ENCODE measurements at regions of chr1 and their contacts with region 1.

Region 1: DNA sequence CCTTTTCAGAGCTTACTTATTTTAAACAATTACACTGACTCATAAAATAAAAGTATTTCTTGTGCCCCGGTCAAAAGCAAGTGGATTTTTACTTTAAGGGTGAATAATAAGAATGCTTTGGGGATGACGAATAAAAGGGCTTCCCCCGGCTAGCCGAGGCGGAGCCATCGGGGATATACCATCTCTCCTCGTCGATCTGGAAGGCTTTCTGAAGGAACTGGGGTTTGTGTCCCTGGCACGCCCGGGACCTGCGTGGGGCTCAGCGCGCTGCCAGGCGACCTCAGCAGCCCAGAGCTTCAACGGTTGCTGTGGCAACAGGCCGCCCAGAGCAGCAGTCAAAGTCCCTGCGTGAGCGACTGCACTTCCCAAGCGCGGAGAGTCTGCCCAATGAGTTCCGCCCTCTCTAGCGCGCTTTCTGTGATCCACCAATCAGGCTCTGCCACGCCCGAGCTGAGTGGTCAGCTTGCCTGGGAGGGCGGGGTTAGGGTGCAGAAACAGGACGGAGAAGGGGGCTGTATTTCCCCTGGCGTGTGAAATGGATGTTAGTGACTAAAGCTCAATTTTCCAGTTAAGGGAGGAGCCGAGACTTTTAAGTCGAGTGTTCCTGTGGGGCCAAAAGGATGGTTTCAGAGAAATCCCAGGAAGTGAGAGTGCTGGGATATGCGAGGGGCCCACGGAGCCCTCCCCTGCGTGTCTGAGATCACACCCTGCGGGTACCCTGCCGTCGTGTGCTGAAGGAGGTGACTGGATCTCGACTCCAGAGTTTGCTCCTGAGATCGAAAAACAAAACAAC is 33.0 kb upstream of the MGST3 start:
- DNase-seq: peak; percentile 91
- ATAC-seq: peak; percentile 97
- H3K4me3 ChIP-seq: peak overlapping the region; percentile 57 to 61
- H3K27ac ChIP-seq: peak overlapping the region; percentile 53
- H3K4me1 ChIP-seq: peaks cover 12 to 23% of the 10 kb centered on the region in 2 experiments
- H3K27me3 ChIP-seq: peaks cover 17% of the 10 kb centered on the region
- CTCF ChIP-seq: no peak
- POLR2A ChIP-seq: no peak
- RAD21 ChIP-seq: no peak

Region 2: DNA sequence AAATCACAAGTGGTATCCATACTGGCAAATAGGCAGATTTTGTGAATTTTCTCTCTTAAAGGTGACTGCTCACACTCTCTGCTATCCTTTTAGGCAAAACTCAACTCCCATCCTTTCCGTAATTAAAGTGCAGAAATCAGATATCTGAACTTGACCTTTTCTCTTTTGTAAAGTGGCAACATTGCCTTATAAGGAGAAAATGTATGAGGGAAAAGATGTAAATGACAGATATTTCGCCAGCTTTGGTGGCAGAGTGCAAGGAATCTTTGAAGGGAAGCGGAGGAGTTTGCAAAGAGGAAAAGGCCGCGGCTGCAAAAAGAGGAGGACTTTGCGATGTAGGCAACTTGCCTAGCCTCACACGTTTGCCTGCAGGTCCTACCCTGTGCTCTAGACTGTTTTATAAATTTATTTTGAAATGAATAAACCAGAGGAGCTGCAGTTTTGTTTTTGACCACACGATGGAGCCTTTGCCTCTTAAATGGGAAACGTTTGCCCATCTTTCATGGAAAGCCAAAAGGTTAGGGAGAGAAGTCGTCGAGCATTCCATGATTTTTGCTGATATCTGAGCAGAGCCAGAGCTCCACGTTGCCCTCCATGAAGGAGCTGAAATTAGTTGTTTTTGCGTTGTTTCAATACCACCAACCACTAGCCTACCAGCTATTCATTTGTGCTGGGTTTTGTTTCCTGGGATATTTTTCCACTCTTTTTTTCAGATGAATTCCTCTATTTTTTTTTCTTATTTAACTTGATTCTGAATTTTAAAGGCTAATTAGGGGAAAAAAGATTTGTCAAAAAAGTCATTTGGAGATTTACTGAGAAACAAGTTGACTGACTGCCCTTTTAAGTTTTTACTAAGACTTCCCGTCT is 483.8 kb before region 1 on chr1:
- CTCF ChIA-PET with region 1: no interaction called
- POLR2A ChIA-PET with region 1: no interaction called
- RAD21 ChIA-PET with region 1: no interaction called
- intact Hi-C with region 1: loop called (anchors 10 kb)
- DNase-seq: peak; percentile 44
- ATAC-seq: peak; percentile 74
- H3K4me3 ChIP-seq: no peak overlapping the region
- H3K27ac ChIP-seq: no peak overlapping the region
- H3K4me1 ChIP-seq: peaks cover 0 to 13% of the 10 kb centered on the region in 2 experiments; a peak in 2 of 4 replicates
- H3K27me3 ChIP-seq: peaks cover 16% of the 10 kb centered on the region
- CTCF ChIP-seq: peak; percentile 65 to 79 (median 67)
- POLR2A ChIP-seq: no peak
- RAD21 ChIP-seq: peak; percentile 82

Region 3: DNA sequence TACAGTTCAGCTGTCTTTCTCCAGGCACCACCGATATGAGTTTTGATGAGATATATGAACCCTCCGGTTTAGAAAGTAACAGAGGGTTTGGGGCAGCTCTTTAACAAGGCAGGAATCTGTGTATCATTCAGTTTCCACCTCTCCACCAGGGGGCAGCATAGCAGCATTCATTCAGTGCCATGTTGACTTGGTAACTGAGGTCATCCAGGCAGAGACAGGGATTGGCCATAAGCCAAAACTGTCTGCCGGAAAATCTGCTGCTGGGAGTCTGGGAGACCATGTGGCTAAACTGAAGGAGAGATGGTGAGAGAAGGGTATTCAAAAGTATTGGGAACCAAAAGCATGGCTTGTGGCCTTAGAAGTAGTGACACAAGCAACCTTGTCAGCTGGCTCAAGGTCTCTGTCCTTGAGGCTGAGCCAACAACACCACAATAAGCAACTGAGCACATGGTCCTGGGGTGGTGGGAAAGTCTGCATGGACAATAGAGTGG is 340.1 kb before region 1 on chr1:
- CTCF ChIA-PET with region 1: interaction called, 6 read pairs
- POLR2A ChIA-PET with region 1: no interaction called
- RAD21 ChIA-PET with region 1: no interaction called
- intact Hi-C with region 1: loop called (anchors 1 kb)
- DNase-seq: peak; percentile 65
- ATAC-seq: peak; percentile 95
- H3K4me3 ChIP-seq: no peak overlapping the region
- H3K27ac ChIP-seq: no peak overlapping the region
- H3K4me1 ChIP-seq: no peaks in the 10 kb centered on the region
- H3K27me3 ChIP-seq: peaks cover 38% of the 10 kb centered on the region
- CTCF ChIP-seq: peak; percentile 73 to 93 (median 82)
- POLR2A ChIP-seq: no peak
- RAD21 ChIP-seq: peak; percentile 80

Region 4: GRCh38 chr1:165392634-165393571 is 205.2 kb before region 1 on chr1:
- CTCF ChIA-PET with region 1: interaction called, 21 read pairs
- POLR2A ChIA-PET with region 1: no interaction called
- RAD21 ChIA-PET with region 1: interaction called, 4 to 8 read pairs
- intact Hi-C with region 1: loop called (anchors 1 kb)
- DNase-seq: peak; percentile 55
- ATAC-seq: peak; percentile 99
- H3K4me3 ChIP-seq: no peak overlapping the region
- H3K27ac ChIP-seq: no peak overlapping the region
- H3K4me1 ChIP-seq: peaks cover 4 to 7% of the 10 kb centered on the region in 2 experiments; a peak in 2 of 4 replicates
- H3K27me3 ChIP-seq: peaks cover 38% of the 10 kb centered on the region
- CTCF ChIP-seq: peak; percentile 63 to 94 (median 91)
- POLR2A ChIP-seq: no peak
- RAD21 ChIP-seq: peak; percentile 86

Region 5: DNA sequence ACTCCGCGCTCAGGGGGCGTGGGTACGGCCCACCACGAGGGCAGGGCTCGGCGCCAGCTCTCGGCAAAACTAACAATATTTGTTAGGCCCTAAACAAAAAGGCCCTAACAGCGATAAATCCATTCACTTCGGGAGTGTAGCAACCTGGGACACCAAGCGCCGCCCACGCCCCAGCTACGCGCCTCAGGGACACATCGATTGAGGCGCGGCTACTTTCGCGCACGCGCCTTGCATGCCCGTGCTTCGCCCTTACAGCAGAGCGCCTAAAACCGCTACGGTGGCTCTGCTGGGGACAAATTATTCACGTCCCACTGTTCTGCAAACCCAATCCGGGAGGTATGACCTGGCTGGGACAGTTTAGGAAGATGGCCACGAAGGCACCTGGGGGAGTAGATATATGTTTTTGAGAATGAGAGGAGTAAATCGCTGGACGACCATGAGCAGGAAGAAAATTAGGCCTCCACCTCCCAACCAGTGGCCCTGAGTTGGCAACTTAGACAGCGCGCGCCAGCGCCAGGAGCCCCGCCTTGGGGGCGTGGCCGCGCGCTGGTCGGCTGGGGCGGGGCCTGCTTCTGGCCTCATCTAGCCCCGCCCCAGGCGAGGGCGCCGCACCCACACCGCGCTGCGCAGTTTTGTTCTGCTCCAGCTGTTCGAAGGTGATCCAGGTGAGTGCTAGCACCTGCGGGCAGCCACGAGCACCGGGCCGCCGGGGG is 32.7 kb after region 1 on chr1 and contains the start of gene MGST3:
- CTCF ChIA-PET with region 1: no interaction called
- POLR2A ChIA-PET with region 1: no interaction called
- RAD21 ChIA-PET with region 1: no interaction called
- intact Hi-C with region 1: loop called (anchors 2 kb)
- DNase-seq: peak; percentile 94
- ATAC-seq: peak; percentile 89
- H3K4me3 ChIP-seq: peak within 1 kb of the TSS; percentile 87 to 88
- H3K27ac ChIP-seq: peak within 1 kb of the TSS; percentile 65
- H3K4me1 ChIP-seq: peaks cover 10 to 31% of the 10 kb centered on the region in 2 experiments
- H3K27me3 ChIP-seq: no peaks in the 10 kb centered on the region
- CTCF ChIP-seq: no peak
- POLR2A ChIP-seq: peak; percentile 78
- RAD21 ChIP-seq: no peak
- total RNA-seq, gene MGST3: 93.7 TPM

Region 6: GRCh38 chr1:165768513-165769394 is 170.7 kb after region 1 on chr1 and contains the start of gene TMCO1:
- CTCF ChIA-PET with region 1: no interaction called
- POLR2A ChIA-PET with region 1: no interaction called
- RAD21 ChIA-PET with region 1: no interaction called
- intact Hi-C with region 1: loop called (anchors 5 kb)
- DNase-seq: peak; percentile 97
- ATAC-seq: peak; percentile 96
- H3K4me3 ChIP-seq: peak within 1 kb of the TSS; percentile 79 to 95
- H3K27ac ChIP-seq: peak within 1 kb of the TSS; percentile 87
- H3K4me1 ChIP-seq: peaks cover 9 to 33% of the 10 kb centered on the region in 2 experiments; a peak in 3 of 4 replicates
- H3K27me3 ChIP-seq: no peaks in the 10 kb centered on the region
- CTCF ChIP-seq: peak in 1 of 3 experiments; percentile 20; a peak in 1 of 6 replicates
- POLR2A ChIP-seq: peak; percentile 88
- RAD21 ChIP-seq: no peak
- total RNA-seq, gene TMCO1: 61.2 TPM

Region 7: DNA sequence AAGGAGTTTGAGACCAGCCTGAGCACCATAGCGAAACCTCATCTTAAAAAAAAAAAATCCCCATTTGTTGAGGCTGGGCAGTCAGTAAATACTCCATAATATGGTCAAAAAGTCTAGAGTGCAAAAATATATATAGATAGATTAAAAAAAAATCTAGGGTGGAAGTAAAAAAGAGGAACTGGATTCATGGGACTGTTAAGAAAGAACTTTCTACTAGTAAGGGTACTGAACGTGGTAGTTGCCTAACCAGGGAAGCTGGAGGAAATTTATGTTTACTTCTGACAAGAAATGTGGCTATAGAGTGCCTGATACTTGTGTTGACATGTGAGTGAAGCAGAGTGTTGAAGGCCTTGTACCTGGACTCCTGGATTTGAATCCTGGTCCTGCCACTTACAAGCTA is 834.6 kb after region 1 on chr1:
- CTCF ChIA-PET with region 1: no interaction called
- POLR2A ChIA-PET with region 1: no interaction called
- RAD21 ChIA-PET with region 1: no interaction called
- intact Hi-C with region 1: loop called (anchors 10 kb)
- DNase-seq: no peak
- ATAC-seq: no peak
- H3K4me3 ChIP-seq: no peak overlapping the region
- H3K27ac ChIP-seq: no peak overlapping the region
- H3K4me1 ChIP-seq: no peaks in the 10 kb centered on the region
- H3K27me3 ChIP-seq: no peaks in the 10 kb centered on the region
- CTCF ChIP-seq: no peak
- POLR2A ChIP-seq: no peak
- RAD21 ChIP-seq: no peak

Measured in HCT116 (cell line).